IMR-90 (cell line): ENCODE measurements at regions of chr6 and their contacts with region 1.

Region 1: GRCh38 chr6:27472617-27473400 is at the start of gene ZNF184:
- DNase-seq: peak; percentile 98
- ATAC-seq: peak; percentile 96
- H3K4me3 ChIP-seq: peak within 1 kb of the TSS; percentile 60
- H3K27ac ChIP-seq: peak within 1 kb of the TSS; percentile 74
- H3K4me1 ChIP-seq: no peaks in the 10 kb centered on the region
- H3K27me3 ChIP-seq: no peaks in the 10 kb centered on the region
- CTCF ChIP-seq: no peak; the same call in 1 of the 2 replicates
- POLR2A ChIP-seq: peak; percentile 82
- RAD21 ChIP-seq: no peak
- total RNA-seq, gene ZNF184: 8.1 and 10.6 TPM in 2 replicates

Region 2: DNA sequence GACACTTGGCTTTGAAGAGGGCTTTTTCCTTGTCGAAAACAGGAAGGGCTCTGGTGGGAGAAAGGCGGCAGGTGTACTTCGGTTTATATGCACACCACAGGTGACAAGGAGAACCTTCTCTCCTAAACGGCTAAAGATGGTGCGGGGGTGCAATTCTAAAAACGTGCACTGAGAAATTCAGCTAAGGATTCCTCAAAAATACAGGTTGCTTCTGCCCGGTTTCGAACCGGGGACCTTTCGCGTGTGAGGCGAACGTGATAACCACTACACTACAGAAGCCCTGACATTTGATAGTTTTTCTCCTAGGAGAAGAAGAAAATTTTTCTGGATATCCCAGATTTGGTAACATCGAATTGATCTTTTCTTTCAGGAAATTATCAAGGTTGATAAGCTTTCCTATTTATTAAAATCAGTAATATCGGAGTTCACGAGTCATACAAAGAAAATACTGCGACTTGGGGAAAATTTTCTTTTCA is 192.7 kb before region 1 on chr6:
- CTCF ChIA-PET with region 1: no interaction called
- POLR2A ChIA-PET with region 1: no interaction called
- dilution Hi-C with region 1: no loop called
- in situ Hi-C with region 1: no loop called
- intact Hi-C with region 1: loop called (anchors 5 kb)
- DNase-seq: peak; percentile 53
- ATAC-seq: peak; percentile 94
- H3K4me3 ChIP-seq: peak overlapping the region; percentile 27
- H3K27ac ChIP-seq: no peak overlapping the region
- H3K4me1 ChIP-seq: no peaks in the 10 kb centered on the region
- H3K27me3 ChIP-seq: peaks cover 27% of the 10 kb centered on the region
- CTCF ChIP-seq: no peak
- POLR2A ChIP-seq: no peak
- RAD21 ChIP-seq: no peak

Region 3: GRCh38 chr6:27295301-27296081 is 177.3 kb before region 1 on chr6:
- CTCF ChIA-PET with region 1: no interaction called
- POLR2A ChIA-PET with region 1: no interaction called
- dilution Hi-C with region 1: no loop called
- in situ Hi-C with region 1: no loop called
- intact Hi-C with region 1: loop called (anchors 1 kb)
- DNase-seq: peak; percentile 85
- ATAC-seq: peak; percentile 72
- H3K4me3 ChIP-seq: peak overlapping the region; percentile 48
- H3K27ac ChIP-seq: no peak overlapping the region
- H3K4me1 ChIP-seq: no peaks in the 10 kb centered on the region
- H3K27me3 ChIP-seq: peaks cover 9% of the 10 kb centered on the region
- CTCF ChIP-seq: no peak
- POLR2A ChIP-seq: no peak
- RAD21 ChIP-seq: no peak